Activated CD8-positive, alpha-beta T cell treated with anti-CD3 and anti-CD28 coated beads for 36 hours (primary cell): ENCODE measurements at regions of chr12 and their contacts with region 1.

Region 1: DNA sequence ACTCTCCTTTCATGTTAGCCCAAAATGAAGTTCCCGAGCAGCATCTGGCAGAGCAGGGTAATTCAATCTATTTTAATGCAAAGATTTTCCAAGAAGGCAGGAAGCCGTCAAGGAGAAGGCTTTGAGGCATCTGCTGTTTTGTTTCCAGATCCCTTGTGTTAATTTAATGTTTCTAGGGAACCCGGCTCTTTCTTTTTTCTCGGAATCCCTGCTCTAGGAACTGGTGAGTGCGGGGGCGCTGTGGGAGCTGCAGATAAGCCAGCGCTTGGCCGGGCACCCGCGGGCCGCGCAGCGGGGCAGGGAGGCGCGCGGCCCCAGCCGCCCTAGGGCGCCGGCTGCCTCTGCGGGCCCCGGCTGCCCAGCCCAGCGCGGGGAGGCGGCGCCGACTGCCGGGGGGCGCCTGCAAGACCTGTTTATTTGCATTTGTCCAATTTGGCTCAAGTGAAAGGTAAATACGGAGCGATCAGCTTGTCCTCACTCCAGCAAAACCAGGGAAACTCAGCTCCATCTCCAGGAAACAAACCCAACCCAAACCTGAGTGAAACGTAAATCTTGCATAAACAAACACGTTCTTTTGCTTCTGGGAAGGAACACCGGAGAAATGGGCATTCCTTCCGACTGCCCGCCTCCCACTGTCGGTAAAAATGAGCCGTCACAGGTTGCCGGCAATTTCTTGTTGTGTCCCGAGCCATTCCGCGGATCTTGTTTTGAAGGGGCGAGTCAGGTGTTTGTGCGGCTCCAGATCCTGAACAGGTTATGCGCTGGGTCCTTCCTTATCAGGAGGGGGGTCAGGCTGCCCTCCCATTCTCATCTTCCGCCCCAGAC is 65.1 kb downstream of the CRADD start:
- DNase-seq: peak; percentile 87
- ATAC-seq: peak; percentile 94
- H3K4me3 Mint-ChIP-seq: peak overlapping the region; percentile 80
- H3K27ac Mint-ChIP-seq: peak overlapping the region; percentile 95
- H3K4me1 Mint-ChIP-seq: peaks cover 36% of the 10 kb centered on the region
- H3K27me3 Mint-ChIP-seq: no peaks in the 10 kb centered on the region
- CTCF ChIP-seq: no peak

Region 2: GRCh38 chr12:93766796-93767523 is 24.6 kb after region 1 on chr12:
- CTCF ChIA-PET with region 1: interaction called, 10 read pairs
- POLR2A ChIA-PET with region 1: no interaction called
- intact Hi-C with region 1: no loop called
- DNase-seq: peak; percentile 55
- ATAC-seq: peak; percentile 80
- H3K4me3 Mint-ChIP-seq: no peak overlapping the region
- H3K27ac Mint-ChIP-seq: no peak overlapping the region
- H3K4me1 Mint-ChIP-seq: peaks cover 38% of the 10 kb centered on the region
- H3K27me3 Mint-ChIP-seq: no peaks in the 10 kb centered on the region
- CTCF ChIP-seq: peak; percentile 55

Region 3: DNA sequence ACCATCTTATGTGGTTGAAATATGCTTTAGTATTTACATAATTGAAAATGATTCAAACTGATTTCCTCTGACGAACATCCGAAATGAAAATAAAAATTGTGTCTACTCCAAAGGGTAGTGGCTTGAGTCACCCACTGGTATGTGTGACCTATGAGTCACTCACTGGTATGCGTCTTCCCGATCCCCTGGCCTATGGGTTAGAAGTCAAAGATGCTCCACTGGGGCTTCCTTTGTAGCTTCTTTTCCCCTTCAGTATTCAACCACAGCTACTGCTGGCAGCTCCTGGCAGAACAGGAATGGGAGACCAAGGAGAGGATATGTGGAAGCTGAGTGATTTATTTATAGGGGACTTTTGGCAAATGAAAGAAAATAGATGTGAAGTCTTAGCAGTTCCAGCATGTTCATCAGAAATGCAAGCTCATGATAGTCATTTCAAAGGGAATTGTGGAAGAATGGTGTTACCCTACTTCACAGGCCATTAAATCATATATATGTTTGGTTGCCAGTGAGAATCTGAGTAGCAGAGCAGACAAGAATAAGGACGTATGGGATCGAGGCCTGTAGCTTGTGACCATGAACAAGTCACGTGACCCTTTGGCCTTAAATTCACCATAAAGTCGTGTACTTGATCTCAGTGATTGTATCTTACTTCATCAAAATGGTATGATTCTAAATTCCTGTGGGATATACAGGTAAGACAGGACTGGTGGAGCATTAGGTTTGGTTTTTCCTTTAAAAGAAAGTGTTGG is 43.1 kb after region 1 on chr12:
- CTCF ChIA-PET with region 1: interaction called, 3 read pairs
- POLR2A ChIA-PET with region 1: interaction called, 3 read pairs
- intact Hi-C with region 1: loop called (anchors 5 kb)
- DNase-seq: peak; percentile 76
- ATAC-seq: peak; percentile 73
- H3K4me3 Mint-ChIP-seq: peak overlapping the region; percentile 36
- H3K27ac Mint-ChIP-seq: peak overlapping the region; percentile 91
- H3K4me1 Mint-ChIP-seq: peaks cover 62% of the 10 kb centered on the region
- H3K27me3 Mint-ChIP-seq: no peaks in the 10 kb centered on the region
- CTCF ChIP-seq: no peak